ENCODE measurements at regions of chr4 and their contacts with region 1.

Region 1: DNA sequence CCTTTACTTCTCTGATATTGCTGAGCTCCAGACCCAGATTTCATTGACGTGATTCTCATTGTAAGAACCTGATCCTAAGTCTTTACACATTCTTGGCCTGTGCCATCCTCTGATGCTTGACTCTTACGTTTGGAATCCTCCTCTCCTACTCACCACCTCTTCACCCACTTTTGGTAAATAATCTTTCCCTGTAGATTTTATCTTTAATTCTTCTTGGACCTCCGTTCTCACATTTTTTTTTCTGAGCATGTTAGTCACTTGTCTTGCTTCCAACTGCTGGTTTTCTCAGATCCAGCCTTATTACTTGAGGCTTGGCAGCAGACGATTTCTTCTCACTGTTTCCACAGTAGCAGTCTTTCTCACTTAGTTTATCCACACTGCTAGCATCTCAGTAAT is 12.4 kb upstream of the SH3RF1 start:
- DNase-seq: no peak
- H3K4me3 ChIP-seq: no peak overlapping the region
- H3K27ac ChIP-seq: no peak overlapping the region
- H3K4me1 ChIP-seq: no peaks in the 10 kb centered on the region
- H3K27me3 ChIP-seq: no peaks in the 10 kb centered on the region
- CTCF ChIP-seq: no peak
- POLR2A ChIP-seq: no peak

Region 2: DNA sequence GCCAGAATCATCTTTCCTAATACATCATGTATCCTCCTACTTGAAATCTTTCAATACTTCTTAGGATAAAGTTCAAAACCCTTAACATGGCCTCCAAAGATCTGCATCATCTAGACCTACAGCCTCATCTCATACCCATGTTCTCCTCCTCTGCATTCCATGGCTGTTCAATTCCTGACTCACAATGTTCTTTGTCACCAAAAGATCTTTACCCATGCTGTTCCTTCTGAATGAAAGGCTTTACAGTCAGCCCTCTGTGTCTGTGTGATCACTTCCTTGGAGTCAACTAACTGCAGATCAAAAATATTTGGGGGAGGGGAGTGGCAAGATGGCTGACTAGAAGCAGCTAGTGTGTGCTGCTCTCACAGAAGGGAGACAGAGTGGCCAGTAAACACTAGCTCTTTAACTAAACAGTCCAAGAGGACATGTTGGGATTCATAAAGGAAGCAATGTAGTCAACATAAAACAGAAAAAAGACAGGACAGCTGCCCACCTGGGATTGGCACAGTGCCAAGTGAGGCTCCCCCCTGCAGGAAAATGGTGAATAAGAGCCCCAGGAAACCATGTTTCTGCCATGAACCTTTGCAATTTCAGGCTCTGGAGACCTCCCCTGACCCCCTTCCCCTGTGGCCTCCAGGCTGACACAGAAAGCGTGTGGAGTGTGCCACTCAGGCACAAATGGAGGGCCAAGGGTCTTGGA is 305.0 kb before region 1 on chr4:
- CTCF ChIA-PET with region 1: no interaction called
- POLR2A ChIA-PET with region 1: no interaction called
- dilution Hi-C with region 1: no loop called
- intact Hi-C with region 1: no loop called
- DNase-seq: no peak
- H3K4me3 ChIP-seq: no peak overlapping the region
- H3K27ac ChIP-seq: no peak overlapping the region
- H3K4me1 ChIP-seq: no peaks in the 10 kb centered on the region
- H3K27me3 ChIP-seq: no peaks in the 10 kb centered on the region
- CTCF ChIP-seq: no peak
- POLR2A ChIP-seq: no peak

Region 3: DNA sequence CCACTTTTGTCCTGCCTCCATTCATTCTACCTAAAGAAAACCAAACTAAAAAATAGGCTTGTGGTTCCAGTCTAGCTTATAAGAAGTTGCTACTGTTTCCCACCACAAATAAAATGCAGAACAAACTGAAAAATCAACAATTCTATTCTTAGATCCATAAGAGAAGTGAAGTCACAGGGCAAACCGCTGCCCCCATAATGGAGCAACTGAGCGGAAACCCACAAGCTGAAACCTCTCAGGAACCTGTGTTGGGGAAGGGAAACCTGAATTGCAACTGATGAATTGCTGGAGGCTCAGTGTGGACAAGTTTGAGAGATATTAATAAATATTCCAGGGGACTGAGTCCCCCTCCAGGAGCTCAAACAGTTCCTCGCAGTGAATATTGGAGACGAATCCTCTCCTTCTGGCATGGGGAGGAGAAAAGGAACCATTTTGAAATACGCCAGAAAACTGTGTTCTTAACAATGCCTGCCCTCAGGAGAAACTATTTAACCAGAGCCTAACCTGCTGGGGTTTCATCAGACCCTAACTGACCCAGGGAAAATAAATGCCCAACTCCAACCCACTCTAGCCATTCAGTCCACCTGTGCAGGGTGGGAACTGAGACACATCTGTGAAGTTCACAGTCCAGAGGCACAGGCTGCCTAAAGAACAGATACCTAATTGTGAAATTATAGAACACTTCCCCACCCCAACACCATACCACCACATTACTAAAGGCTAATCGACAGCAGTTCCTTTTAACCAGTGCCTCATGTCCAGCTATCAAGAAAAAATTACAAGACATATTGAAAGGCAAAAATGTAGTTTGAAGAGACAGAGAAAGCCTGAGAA is 10.4 kb after region 1 on chr4:
- CTCF ChIA-PET with region 1: interaction called, 4 read pairs
- POLR2A ChIA-PET with region 1: no interaction called
- dilution Hi-C with region 1: no loop called
- intact Hi-C with region 1: loop called (anchors 1 kb)
- DNase-seq: no peak
- H3K4me3 ChIP-seq: no peak overlapping the region
- H3K27ac ChIP-seq: no peak overlapping the region
- H3K4me1 ChIP-seq: no peaks in the 10 kb centered on the region
- H3K27me3 ChIP-seq: no peaks in the 10 kb centered on the region
- CTCF ChIP-seq: no peak
- POLR2A ChIP-seq: no peak